Vagina (tissue), 2 donors: ENCODE measurements at regions of chr6 and their contacts with region 1.

Region 1: DNA sequence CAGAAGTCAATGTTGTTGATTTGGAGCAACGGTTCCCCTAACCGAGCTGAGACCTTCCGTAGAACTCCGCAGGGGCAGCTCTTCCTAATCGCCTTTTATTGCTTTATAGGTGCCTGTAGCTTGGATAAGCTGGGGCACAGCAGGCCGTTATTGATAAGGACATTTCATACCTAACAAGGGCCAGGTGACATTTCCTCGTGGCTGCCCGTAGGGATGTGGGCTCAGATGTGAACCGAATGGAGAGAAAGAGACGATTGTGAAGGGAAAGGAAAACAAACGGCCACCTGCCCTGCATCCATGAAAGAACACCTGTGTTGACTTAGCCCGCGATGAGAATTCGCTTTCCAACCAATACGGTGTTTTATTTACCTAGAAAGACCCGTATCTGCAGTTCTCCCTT is 53.3 kb upstream of the DACT2 start:
- DNase-seq: no peak
- H3K4me3 ChIP-seq: no peak overlapping the region
- H3K27ac ChIP-seq: no peak overlapping the region
- H3K4me1 ChIP-seq: no peaks in the 10 kb centered on the region
- H3K27me3 ChIP-seq: no peaks in the 10 kb centered on the region
- CTCF ChIP-seq: no peak
- POLR2A ChIP-seq: no peak

Region 2: GRCh38 chr6:168884646-168885086 is 511.8 kb after region 1 on chr6:
- intact Hi-C with region 1: loop called (anchors 2 kb)
- DNase-seq: no peak
- H3K4me3 ChIP-seq: peak overlapping the region in 1 of 2 donors; percentile 38
- H3K27ac ChIP-seq: no peak overlapping the region
- H3K4me1 ChIP-seq: no peaks in the 10 kb centered on the region
- H3K27me3 ChIP-seq: no peaks in the 10 kb centered on the region
- CTCF ChIP-seq: peak; percentile 86 to 93 (median 90)
- POLR2A ChIP-seq: no peak